ENCODE measurements at regions of chr3 and their contacts with region 1.

Region 1: DNA sequence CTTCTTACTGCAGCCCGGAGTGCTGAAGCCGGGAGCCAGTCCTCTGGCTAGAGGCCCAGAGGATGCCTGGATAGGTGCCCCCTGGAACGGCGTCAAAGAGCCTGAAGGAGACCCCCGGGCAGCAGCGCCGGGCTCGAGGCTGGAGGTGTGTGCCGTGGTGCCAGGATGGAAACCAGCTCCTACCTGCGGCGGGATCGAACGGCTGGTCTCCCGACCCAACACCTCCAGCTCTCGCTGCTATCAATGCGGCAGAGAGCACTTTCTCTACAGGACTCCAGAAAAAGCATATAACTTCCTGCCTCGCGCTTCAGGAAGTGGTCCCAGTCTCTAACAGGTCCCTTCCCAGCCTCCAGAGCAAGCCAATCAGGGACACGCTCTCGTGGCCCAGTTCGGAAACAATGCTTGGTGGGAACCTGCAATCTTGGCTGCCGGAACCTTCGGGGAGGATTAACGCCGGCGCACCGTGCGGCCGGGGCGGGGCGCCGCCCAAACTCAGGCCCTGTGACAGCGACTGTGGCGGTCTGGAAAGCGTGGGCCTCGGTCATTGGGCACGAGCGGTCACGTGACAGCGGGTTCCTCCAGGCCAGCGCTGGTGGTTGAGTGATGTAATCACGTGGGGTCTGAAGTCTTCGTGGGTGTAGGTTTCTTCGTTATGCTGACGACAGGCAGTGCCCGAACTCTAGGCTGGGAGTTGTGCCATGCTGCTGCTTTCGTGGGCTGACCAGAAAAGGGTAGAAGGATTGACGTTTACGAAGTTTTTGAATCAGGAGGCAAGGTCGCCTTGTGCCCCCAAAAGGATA is at the start of gene SLC33A1:
- DNase-seq: peak; percentile 99
- H3K4me3 ChIP-seq: peak within 1 kb of the TSS; percentile 77 to 97
- H3K27ac ChIP-seq: peak within 1 kb of the TSS; percentile 88 to 93
- H3K4me1 ChIP-seq: no peaks in the 10 kb centered on the region
- H3K27me3 ChIP-seq: no peaks in the 10 kb centered on the region
- CTCF ChIP-seq: peak in 2 of 4 experiments; percentile 17 to 28
- POLR2A ChIP-seq: peak; percentile 56
- total RNA-seq, gene SLC33A1: 43.4 to 43.9 TPM

Region 2: GRCh38 chr3:155805802-155806618 is 48.3 kb before region 1 on chr3 and contains the start of gene C3orf33:
- intact Hi-C with region 1: loop called (anchors 5 kb)
- DNase-seq: peak; percentile 48
- H3K4me3 ChIP-seq: peak within 1 kb of the TSS; percentile 62 to 74
- H3K27ac ChIP-seq: peak within 1 kb of the TSS; percentile 83
- H3K4me1 ChIP-seq: no peaks in the 10 kb centered on the region
- H3K27me3 ChIP-seq: no peaks in the 10 kb centered on the region
- CTCF ChIP-seq: peak; percentile 50 to 84 (median 70)
- POLR2A ChIP-seq: peak; percentile 4
- total RNA-seq, gene C3orf33: 4.9 to 7.6 TPM

Measured in prostate gland (tissue), 2 donors.